PC-3 (cell line): ENCODE measurements at regions of chr20 and their contacts with region 1.

Region 1: GRCh38 chr20:3846740-3847428 is at the start of gene MAVS:
- DNase-seq: peak; percentile 88
- ATAC-seq: peak; percentile 86
- H3K4me3 ChIP-seq: peak within 1 kb of the TSS; percentile 94
- H3K27ac ChIP-seq: peak within 1 kb of the TSS; percentile 94
- H3K4me1 ChIP-seq: peaks cover 50% of the 10 kb centered on the region
- H3K27me3 ChIP-seq: no peaks in the 10 kb centered on the region
- CTCF ChIP-seq: no peak
- total RNA-seq, gene MAVS: 38.7 and 44.8 TPM in 2 replicates

Region 2: GRCh38 chr20:3997446-3997845 is 150.6 kb after region 1 on chr20:
- CTCF ChIA-PET with region 1: no interaction called
- POLR2A ChIA-PET with region 1: interaction called, 14 read pairs
- intact Hi-C with region 1: no loop called
- DNase-seq: no peak
- ATAC-seq: no peak
- H3K4me3 ChIP-seq: no peak overlapping the region
- H3K27ac ChIP-seq: no peak overlapping the region
- H3K4me1 ChIP-seq: peaks cover 11% of the 10 kb centered on the region
- H3K27me3 ChIP-seq: no peaks in the 10 kb centered on the region
- CTCF ChIP-seq: no peak